Activated T-helper 2 cell treated with anti-CD3 and anti-CD28 coated beads, Interferon-gamma antibody, Interleukin-2, Interleukin-4, amounts not matched to agents 10 μg/mL and 5 μg/mL and 100 μg/mL, durations not matched to agents 14 hours and 24 hours and 36 hours (primary cell): ENCODE measurements at regions of chr11 and their contacts with region 1.

Region 1: DNA sequence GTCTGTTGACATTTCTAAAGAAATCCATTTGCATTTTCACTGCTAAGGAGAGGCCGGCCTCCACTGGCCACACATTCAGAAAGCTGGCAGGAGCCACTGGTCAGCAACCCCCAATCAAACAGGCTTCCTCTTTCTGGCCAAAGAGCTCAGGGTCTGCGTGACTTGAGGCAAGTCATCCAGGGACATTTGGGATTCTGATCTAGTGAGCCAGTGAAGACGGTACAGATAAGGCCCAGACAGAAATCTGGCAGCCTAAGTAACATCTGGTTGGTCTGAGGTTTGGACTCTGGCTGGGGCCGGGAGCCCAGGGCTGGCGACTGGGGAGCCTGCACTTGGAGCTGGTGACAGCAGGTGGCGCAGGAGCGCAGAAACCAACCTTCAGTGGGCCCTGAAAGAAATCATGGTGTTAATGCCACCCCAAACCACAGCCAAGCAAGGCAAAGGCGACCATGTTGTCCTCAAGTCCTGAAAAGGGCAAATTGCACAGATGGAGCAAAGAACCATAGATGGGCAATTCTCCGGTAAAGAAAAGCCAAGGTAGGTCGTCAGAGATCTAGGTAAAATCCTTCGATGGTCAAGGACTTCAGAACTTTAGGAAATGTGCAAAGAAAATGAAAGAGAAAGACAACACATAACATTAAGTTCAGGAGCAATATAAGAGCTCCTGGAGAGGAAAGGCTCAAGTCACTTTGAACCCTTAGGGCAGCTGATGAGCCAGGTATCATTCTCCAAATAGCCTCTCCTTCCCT is 99.4 kb upstream of the BLID start:
- DNase-seq: peak; percentile 10
- H3K4me3 Mint-ChIP-seq: no peak overlapping the region
- H3K27ac Mint-ChIP-seq: no peak overlapping the region
- H3K4me1 Mint-ChIP-seq: no peaks in the 10 kb centered on the region
- H3K27me3 Mint-ChIP-seq: no peaks in the 10 kb centered on the region

Region 2: DNA sequence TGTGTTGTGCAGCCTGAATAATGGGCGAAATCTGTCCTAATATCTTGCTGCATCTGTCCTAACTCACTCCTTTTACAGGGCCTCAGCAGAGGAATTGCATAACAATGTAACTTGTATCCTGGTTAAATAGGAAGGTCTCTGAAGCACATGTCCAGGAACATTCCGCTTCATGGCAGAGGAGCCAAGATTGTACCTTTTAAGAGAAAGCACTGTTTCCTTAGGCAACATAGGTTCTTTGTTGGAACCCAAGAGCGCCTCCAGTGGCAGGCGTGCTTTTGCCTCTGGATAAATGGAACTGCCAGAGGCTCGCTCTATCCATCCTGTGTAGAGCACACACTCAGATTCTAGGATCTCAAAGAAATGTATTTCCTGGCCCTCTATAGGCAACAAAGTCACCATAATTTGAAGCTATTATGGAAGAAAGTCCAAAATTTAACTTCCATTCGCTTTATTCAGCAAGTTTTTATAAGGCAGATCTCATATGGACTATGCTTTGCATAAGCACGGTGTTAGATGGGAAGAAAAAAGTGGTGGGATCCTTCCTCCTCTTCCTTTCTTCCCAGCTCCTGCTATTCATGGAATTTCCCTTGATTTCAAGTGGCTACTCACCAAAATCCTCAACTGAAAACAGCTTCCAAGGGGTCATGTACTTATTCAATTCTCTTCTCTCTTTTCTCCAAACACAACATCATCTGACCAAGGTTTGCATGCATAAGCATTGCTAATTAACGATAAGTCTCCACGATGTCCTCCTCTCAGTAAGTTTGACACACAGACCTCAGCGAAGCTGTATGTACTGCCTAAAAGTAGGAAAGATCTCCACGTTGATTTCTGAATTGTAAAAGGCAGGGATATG is 99.7 kb before region 1 on chr11 and contains the start of gene BLID:
- intact Hi-C with region 1: no loop called
- DNase-seq: no peak
- H3K4me3 Mint-ChIP-seq: no peak within 1 kb of the TSS
- H3K27ac Mint-ChIP-seq: no peak within 1 kb of the TSS
- H3K4me1 Mint-ChIP-seq: no peaks in the 10 kb centered on the region
- H3K27me3 Mint-ChIP-seq: no peaks in the 10 kb centered on the region
- total RNA-seq, gene BLID: not detected in 2 replicates

Region 3: GRCh38 chr11:122505304-122506006 is 290.0 kb after region 1 on chr11:
- intact Hi-C with region 1: loop called (anchors 1 kb)
- DNase-seq: peak; percentile 10
- H3K4me3 Mint-ChIP-seq: no peak overlapping the region
- H3K27ac Mint-ChIP-seq: no peak overlapping the region
- H3K4me1 Mint-ChIP-seq: no peaks in the 10 kb centered on the region
- H3K27me3 Mint-ChIP-seq: peaks cover 11% of the 10 kb centered on the region